H1 (cell line): ENCODE measurements at regions of chr12 and their contacts with region 1.

Region 1: GRCh38 chr12:6195665-6196535 is 4.3 kb upstream of the CD9 start:
- DNase-seq: peak; percentile 84 to 99
- H3K4me3 ChIP-seq: no peak overlapping the region
- H3K27ac ChIP-seq: no peak overlapping the region
- H3K4me1 ChIP-seq: peaks cover 7 to 24% (median 15%) of the 10 kb centered on the region in 4 experiments
- H3K27me3 ChIP-seq: peaks cover 0 to 10% (median 6%) of the 10 kb centered on the region in 4 experiments; a peak in 3 of 7 replicates
- CTCF ChIP-seq: peak; percentile 83 to 98 (median 95)
- EP300 ChIP-seq: no peak
- POLR2A ChIP-seq: no peak
- RAD21 ChIP-seq: peak; percentile 91 to 95

Region 2: DNA sequence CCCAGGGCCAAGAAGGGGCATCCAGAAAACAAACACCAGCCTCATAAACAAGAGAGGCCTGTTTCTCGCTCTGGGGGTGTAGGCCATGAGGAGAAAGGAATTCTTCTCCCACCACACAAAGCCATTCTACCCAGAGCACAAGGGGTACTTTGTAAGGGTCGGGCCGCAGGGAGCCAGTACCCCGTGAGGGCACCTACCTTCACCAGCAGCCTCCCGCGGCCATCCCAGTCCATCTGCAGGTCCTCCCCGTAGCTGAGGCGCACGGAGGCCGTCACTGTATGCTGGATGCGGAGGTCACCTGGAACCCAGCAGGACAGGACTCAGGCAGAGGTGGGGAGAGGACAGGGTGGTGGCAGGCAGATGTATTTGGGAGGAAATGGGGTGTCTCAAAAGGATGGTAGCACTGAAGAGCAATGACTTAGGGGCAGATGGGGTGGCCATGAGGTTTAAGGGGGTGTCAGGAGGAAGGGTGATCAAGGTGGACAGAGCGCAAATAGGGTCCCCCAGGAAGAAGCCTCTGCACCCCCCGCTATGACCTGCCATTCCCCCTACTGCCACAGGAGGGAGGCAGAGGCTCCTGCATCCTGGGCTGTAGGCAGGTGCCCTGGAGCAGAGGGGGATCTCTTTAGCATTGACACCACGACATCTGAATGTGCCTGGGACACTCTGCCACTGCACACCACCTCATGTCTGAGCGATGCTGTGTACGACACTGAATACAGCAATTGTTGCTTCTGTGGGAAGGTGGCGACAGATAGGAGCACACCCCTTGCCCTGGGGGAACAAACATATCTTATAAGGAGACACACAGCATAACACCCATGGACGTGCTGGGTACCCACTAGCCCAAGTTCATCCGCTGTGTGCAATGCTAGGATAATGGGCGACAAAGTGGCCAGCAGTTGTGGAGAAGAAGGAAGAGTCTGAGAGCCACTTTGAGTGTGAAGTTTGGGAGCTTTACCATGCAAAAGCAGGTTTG is 132.9 kb before region 1 on chr12:
- CTCF ChIA-PET with region 1: interaction called, 50 read pairs
- POLR2A ChIA-PET with region 1: interaction called, 3 read pairs
- DNase-seq: peak in 1 of 2 experiments; percentile 90
- H3K4me3 ChIP-seq: no peak overlapping the region
- H3K27ac ChIP-seq: no peak overlapping the region
- H3K4me1 ChIP-seq: peaks cover 7 to 9% (median 7%) of the 10 kb centered on the region in 4 experiments
- H3K27me3 ChIP-seq: peaks cover 0 to 3% (median 0%) of the 10 kb centered on the region in 4 experiments; a peak in 1 of 7 replicates
- CTCF ChIP-seq: peak; percentile 92 to 99 (median 98)
- EP300 ChIP-seq: no peak
- POLR2A ChIP-seq: no peak
- RAD21 ChIP-seq: peak; percentile 97

Region 3: DNA sequence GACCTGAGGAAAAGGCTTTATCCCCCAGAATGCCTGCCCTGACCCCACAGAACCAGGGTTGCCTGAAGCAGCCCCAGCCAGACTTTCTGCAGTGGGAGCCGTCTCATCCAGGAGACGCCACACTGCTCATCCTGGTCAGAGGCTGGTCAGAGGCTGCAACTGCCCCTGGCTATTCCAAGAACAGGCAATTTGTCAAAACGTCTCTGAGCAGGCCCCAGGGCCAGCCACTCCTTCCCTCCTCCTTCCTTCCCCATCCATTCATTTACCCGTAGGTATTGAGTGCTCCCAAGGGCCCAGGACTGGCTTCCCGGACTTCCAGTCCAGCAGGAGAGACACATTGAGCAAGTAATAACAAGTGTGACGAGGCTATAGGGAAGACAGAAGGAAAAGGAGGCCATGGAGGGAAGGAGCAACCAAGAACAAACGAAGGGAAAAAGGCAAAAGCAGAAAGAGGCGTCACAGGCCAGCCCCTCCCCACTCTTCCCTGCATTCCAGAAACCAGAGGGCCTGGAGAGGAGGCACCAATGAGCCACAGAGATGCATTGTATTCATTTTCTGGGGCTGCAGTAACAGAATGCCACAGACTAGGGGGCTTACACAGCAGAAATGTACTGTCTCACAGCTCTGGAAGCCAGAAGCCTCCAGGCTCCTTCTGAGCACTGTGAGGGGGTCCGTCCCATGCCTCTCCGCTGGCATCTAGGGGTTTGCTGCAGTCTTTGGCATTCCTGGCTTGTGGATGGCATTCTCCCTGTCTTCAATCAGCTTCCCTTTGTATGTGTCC is 16.7 kb before region 1 on chr12:
- CTCF ChIA-PET with region 1: interaction called, 16 read pairs
- POLR2A ChIA-PET with region 1: interaction called, 4 read pairs
- DNase-seq: no peak
- H3K4me3 ChIP-seq: no peak overlapping the region
- H3K27ac ChIP-seq: no peak overlapping the region
- H3K4me1 ChIP-seq: peaks cover 0 to 12% (median 1%) of the 10 kb centered on the region in 4 experiments; a peak in 5 of 7 replicates
- H3K27me3 ChIP-seq: no peaks in the 10 kb centered on the region
- CTCF ChIP-seq: peak; percentile 6 to 51 (median 42)
- EP300 ChIP-seq: no peak
- POLR2A ChIP-seq: no peak
- RAD21 ChIP-seq: peak; percentile 17 to 59; a peak in 3 of 4 replicates

Region 4: DNA sequence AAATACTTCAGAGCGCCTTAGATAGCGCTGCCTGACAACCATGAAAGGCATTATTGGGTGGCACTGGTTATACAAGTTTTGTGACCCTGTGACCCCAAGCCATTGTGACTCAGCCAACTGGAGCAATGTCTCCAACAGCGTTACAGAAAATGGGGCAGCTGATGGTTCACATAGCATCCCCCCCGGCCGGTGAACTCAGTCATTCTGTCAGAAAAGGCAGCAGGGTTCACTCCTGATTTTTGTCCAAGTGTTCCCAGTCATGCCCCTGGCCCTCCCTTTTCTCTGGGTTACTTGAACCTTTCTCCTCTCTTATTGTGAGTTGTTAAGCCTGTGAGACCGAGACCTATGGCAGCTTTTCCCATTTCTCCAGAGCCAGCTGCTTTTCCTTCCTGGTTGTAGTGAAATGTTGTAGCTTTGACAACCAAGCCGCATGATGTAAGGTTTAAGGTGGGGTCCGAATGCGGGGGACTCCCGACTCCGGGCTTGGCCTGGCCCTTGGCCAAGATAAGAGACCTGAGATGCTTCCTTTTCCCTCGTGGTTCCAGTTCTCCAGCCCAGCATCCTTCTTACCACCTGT is 26.3 kb after region 1 on chr12:
- CTCF ChIA-PET with region 1: interaction called, 130 read pairs
- POLR2A ChIA-PET with region 1: interaction called, 203 read pairs
- DNase-seq: no peak
- H3K4me3 ChIP-seq: no peak overlapping the region
- H3K27ac ChIP-seq: no peak overlapping the region
- H3K4me1 ChIP-seq: peaks cover 3 to 11% (median 7%) of the 10 kb centered on the region in 4 experiments
- H3K27me3 ChIP-seq: no peaks in the 10 kb centered on the region; a peak in 1 of 7 replicates
- CTCF ChIP-seq: no peak
- EP300 ChIP-seq: no peak
- POLR2A ChIP-seq: no peak
- RAD21 ChIP-seq: no peak

Region 5: GRCh38 chr12:6272300-6273204 is 76.7 kb after region 1 on chr12:
- CTCF ChIA-PET with region 1: interaction called, 433 read pairs
- POLR2A ChIA-PET with region 1: interaction called, 33 read pairs
- DNase-seq: no peak
- H3K4me3 ChIP-seq: no peak overlapping the region
- H3K27ac ChIP-seq: peak overlapping the region; percentile 31; the same call in 1 of the 2 replicates
- H3K4me1 ChIP-seq: peaks cover 24 to 35% (median 31%) of the 10 kb centered on the region in 4 experiments
- H3K27me3 ChIP-seq: no peaks in the 10 kb centered on the region
- CTCF ChIP-seq: no peak
- EP300 ChIP-seq: no peak
- POLR2A ChIP-seq: no peak
- RAD21 ChIP-seq: no peak